ENCODE measurements at regions of chr1 and their contacts with region 1.

Region 1: GRCh38 chr1:242454262-242455045 is 70.0 kb downstream of the PLD5 start:
- DNase-seq: no peak
- ATAC-seq: peak in 1 of 8 donors; percentile 34
- H3K4me3 ChIP-seq: no peak overlapping the region
- H3K27ac ChIP-seq: no peak overlapping the region
- H3K4me1 ChIP-seq: no peaks in the 10 kb centered on the region
- H3K27me3 ChIP-seq: peaks cover 0 to 18% (median 8%) of the 10 kb centered on the region in 7 donors
- CTCF ChIP-seq: peak; percentile 36 to 70 (median 63)

Region 2: GRCh38 chr1:242579528-242580235 is 125.2 kb after region 1 on chr1:
- intact Hi-C with region 1: no loop called
- DNase-seq: no peak
- ATAC-seq: no peak
- H3K4me3 ChIP-seq: no peak overlapping the region
- H3K27ac ChIP-seq: no peak overlapping the region
- H3K4me1 ChIP-seq: no peaks in the 10 kb centered on the region
- H3K27me3 ChIP-seq: no peaks in the 10 kb centered on the region
- CTCF ChIP-seq: no peak

Region 3: DNA sequence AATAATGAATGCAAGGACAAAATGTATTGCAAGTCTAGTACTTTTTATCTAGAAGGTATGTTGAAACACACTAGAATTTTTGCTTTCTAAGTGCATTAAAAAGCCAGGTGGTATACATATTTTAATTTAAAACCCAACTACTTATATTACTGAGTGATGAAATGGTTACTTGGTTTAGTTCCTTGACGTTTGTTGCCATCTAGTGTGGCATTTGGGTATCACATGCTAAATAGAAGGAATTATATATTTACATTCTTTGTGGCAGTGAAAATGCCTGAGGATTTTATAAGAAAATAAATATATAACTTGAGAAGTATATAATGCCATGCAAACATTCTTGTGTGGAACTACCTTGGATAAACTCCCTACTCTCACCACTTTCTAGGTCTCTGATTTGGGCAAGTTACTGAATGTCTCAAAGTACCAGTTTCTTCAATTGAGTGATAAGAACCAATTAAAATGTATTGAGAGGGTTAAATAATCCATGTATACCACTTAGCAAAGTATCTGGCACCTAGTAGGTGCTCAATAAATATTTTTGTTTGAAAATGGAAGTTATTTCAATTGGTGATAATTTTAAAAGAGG is 870.9 kb after region 1 on chr1:
- intact Hi-C with region 1: loop called in 1 of 10 experiments (anchors 10 kb)
- DNase-seq: no peak
- ATAC-seq: peak in 1 of 8 donors; percentile 39
- H3K4me3 ChIP-seq: no peak overlapping the region
- H3K27ac ChIP-seq: no peak overlapping the region
- H3K4me1 ChIP-seq: peaks cover 0 to 6% (median 0%) of the 10 kb centered on the region in 9 donors
- H3K27me3 ChIP-seq: no peaks in the 10 kb centered on the region
- CTCF ChIP-seq: peak; percentile 58 to 89 (median 80)

Measured in heart right ventricle (tissue), 16 donors.